ENCODE measurements at regions of chr1 and their contacts with region 1.

Region 1: DNA sequence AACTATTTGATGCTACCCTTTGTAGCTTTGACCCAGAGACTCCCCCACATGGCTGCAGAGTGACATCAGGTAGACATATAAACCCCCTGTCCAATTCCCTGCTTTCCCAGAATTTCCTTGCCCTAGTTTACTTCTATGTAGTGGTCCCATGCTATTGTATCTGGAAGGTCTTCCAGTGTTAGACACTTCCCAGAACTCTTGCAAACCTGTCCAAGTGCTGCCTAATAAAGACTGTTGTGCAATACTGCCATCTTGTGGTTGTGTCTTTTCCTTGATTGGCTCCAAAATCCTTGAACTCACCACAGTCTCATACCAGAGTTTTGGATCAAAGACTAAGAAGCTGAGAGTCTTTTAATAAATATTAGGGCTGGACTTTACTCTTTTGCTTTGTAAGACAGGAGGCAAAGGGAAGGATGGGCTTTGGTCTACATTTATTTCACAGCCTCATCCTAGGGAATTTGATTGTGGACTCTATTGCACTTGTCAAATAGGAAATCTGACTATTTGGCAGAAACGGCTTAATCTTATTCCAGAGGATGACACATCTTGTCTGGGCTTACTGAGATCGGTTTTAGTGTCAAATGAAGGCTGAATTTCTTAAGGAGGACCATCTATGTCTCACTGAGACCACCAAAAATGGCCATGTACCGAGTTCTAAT is 169.9 kb downstream of the LRRC7 start:
- DNase-seq: peak; percentile 79
- ATAC-seq: peak; percentile 77
- H3K4me3 ChIP-seq: no peak overlapping the region
- H3K27ac ChIP-seq: no peak overlapping the region
- H3K4me1 ChIP-seq: no peaks in the 10 kb centered on the region
- H3K27me3 ChIP-seq: peaks cover 33% of the 10 kb centered on the region
- CTCF ChIP-seq: peak; percentile 87

Region 2: GRCh38 chr1:68600049-68600661 is 1137.5 kb before region 1 on chr1:
- CTCF ChIA-PET with region 1: no interaction called
- POLR2A ChIA-PET with region 1: no interaction called
- intact Hi-C with region 1: loop called (anchors 5 kb)
- DNase-seq: peak; percentile 53
- ATAC-seq: peak; percentile 53
- H3K4me3 ChIP-seq: no peak overlapping the region
- H3K27ac ChIP-seq: no peak overlapping the region
- H3K4me1 ChIP-seq: no peaks in the 10 kb centered on the region
- H3K27me3 ChIP-seq: peaks cover 32% of the 10 kb centered on the region; the same call in 1 of the 2 replicates
- CTCF ChIP-seq: peak; percentile 89

Measured in PC-3 (cell line).